ENCODE measurements at regions of chr22 and their contacts with region 1.

Region 1: GRCh38 chr22:22710719-22711531 is 66.5 kb downstream of the GGTLC2 start:
- DNase-seq: peak; percentile 93 to 100 (median 99)
- ATAC-seq: peak; percentile 88
- H3K4me3 ChIP-seq: no peak overlapping the region
- H3K27ac ChIP-seq: no peak overlapping the region
- H3K4me1 ChIP-seq: no peaks in the 10 kb centered on the region
- H3K27me3 ChIP-seq: peaks cover 3 to 20% of the 10 kb centered on the region in 2 experiments; a peak in 2 of 5 replicates
- CTCF ChIP-seq: no peak
- EP300 ChIP-seq: no peak
- POLR2A ChIP-seq: no peak
- RAD21 ChIP-seq: no peak

Region 2: DNA sequence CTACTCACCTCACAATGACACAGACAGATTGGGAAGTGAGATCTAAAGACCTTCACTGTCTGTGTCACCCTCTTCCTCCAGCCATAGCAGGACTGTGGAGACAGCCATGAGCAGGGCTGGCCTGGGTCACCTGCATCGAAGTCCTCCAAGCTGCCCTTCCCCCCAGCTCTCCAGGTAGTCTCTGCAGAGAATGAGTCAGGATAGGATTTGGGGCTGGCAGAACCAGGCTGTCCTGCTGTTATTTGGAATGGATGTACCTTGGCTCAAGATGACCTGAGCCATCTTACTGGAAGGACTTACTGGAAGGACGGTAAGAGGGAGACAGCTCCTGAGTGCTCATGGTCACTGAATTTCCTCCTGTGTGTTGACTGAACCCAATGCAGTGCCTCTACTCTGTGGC is 37.3 kb before region 1 on chr22:
- CTCF ChIA-PET with region 1: no interaction called
- POLR2A ChIA-PET with region 1: interaction called, 4 read pairs
- in situ Hi-C with region 1: no loop called
- intact Hi-C with region 1: loop called (anchors 5 kb)
- DNase-seq: no peak
- ATAC-seq: peak; percentile 23
- H3K4me3 ChIP-seq: no peak overlapping the region
- H3K27ac ChIP-seq: no peak overlapping the region
- H3K4me1 ChIP-seq: no peaks in the 10 kb centered on the region
- H3K27me3 ChIP-seq: peaks cover 33 to 41% of the 10 kb centered on the region in 2 experiments
- CTCF ChIP-seq: no peak
- EP300 ChIP-seq: no peak
- POLR2A ChIP-seq: no peak
- RAD21 ChIP-seq: no peak

Region 3: GRCh38 chr22:22692707-22693530 is 18.0 kb before region 1 on chr22:
- CTCF ChIA-PET with region 1: interaction called, 30 read pairs
- POLR2A ChIA-PET with region 1: interaction called, 122 read pairs
- in situ Hi-C with region 1: no loop called
- intact Hi-C with region 1: no loop called
- DNase-seq: peak; percentile 96 to 100 (median 99)
- ATAC-seq: peak; percentile 94
- H3K4me3 ChIP-seq: no peak overlapping the region
- H3K27ac ChIP-seq: no peak overlapping the region
- H3K4me1 ChIP-seq: no peaks in the 10 kb centered on the region
- H3K27me3 ChIP-seq: peaks cover 0 to 27% of the 10 kb centered on the region in 2 experiments; a peak in 2 of 5 replicates
- CTCF ChIP-seq: no peak
- EP300 ChIP-seq: no peak
- POLR2A ChIP-seq: no peak
- RAD21 ChIP-seq: no peak

Region 4: DNA sequence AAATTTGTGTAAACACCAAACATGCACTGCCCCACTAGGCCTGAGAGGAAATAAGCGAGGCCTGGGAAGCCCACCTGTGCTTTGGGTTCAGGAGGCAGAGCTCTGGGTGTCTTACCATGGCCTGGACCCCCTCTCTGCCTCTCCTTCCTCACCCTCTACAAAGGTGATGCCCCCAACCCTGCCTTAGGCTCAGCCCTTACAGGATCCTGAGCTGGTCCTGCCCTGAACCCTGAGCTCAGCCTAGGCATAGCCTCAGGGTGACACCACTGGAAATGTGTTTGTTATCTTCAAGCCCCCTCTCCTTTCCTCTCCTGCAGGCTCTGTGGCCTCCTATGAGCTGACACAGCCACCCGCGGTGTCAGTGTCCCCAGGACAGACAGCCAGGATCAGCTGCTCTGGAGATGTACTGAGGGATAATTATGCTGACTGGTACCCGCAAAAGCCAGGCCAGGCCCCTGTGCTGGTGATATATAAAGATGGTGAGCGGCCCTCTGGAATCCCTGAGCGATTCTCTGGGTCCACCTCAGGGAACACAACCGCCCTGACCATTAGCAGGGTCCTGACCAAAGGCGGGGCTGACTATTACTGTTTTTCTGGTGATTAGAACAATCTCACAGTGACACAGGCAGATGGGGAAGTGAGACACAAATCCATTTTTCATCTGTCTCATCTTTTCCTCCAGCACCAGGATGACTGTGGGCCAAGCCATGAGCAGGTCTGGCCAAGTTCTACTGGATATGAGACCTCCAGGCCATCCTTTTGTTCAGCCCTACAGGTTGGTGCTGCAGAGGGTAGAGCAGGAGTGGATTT is 51.2 kb after region 1 on chr22:
- CTCF ChIA-PET with region 1: no interaction called
- POLR2A ChIA-PET with region 1: interaction called, 38 read pairs
- in situ Hi-C with region 1: loop called (anchors 5 kb)
- intact Hi-C with region 1: no loop called
- DNase-seq: no peak
- ATAC-seq: peak; percentile 6
- H3K4me3 ChIP-seq: no peak overlapping the region
- H3K27ac ChIP-seq: no peak overlapping the region
- H3K4me1 ChIP-seq: no peaks in the 10 kb centered on the region
- H3K27me3 ChIP-seq: peaks cover 17 to 21% of the 10 kb centered on the region in 2 experiments
- CTCF ChIP-seq: no peak
- EP300 ChIP-seq: no peak
- POLR2A ChIP-seq: no peak
- RAD21 ChIP-seq: no peak

Region 5: DNA sequence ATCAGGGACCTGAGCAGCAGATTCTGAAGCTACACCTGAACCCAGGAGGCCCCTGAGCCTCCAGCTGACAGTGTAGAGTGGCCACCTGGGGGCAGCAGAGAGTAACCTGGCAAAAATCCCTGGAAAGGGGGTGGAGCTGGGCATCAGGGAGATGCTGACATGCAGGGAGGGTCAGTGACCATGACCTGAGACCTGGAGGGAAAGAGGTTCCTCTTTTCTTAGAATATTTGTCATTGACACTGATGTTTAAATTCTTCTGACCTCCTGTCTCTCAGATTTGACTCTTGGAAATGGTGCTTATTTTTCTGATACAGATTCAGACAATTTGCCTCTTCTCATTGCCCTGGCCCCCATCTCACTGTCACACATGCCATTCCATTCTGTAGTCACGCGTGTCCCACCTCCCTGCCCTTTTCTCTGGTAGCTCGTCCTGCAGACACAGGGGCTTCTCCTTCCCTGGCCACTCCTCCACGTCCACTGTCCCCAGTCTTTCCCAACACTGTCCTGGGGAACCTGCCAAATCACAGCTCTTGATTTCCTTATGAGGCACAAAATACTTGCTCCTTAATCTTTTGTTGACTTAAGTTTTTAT is 59.5 kb after region 1 on chr22:
- CTCF ChIA-PET with region 1: interaction called, 4 read pairs
- POLR2A ChIA-PET with region 1: interaction called, 38 read pairs
- in situ Hi-C with region 1: loop called (anchors 5 kb)
- intact Hi-C with region 1: no loop called
- DNase-seq: peak; percentile 96 to 100 (median 98)
- ATAC-seq: peak; percentile 94
- H3K4me3 ChIP-seq: no peak overlapping the region
- H3K27ac ChIP-seq: no peak overlapping the region
- H3K4me1 ChIP-seq: no peaks in the 10 kb centered on the region
- H3K27me3 ChIP-seq: peaks cover 0 to 32% of the 10 kb centered on the region in 2 experiments; a peak in 2 of 5 replicates
- CTCF ChIP-seq: peak in 1 of 3 experiments; percentile 100; a peak in 2 of 6 replicates
- EP300 ChIP-seq: peak; percentile 71
- POLR2A ChIP-seq: no peak
- RAD21 ChIP-seq: no peak